CD8-positive, alpha-beta T cell (primary cell): ENCODE measurements at regions of chr5 and their contacts with region 1.

Region 1: DNA sequence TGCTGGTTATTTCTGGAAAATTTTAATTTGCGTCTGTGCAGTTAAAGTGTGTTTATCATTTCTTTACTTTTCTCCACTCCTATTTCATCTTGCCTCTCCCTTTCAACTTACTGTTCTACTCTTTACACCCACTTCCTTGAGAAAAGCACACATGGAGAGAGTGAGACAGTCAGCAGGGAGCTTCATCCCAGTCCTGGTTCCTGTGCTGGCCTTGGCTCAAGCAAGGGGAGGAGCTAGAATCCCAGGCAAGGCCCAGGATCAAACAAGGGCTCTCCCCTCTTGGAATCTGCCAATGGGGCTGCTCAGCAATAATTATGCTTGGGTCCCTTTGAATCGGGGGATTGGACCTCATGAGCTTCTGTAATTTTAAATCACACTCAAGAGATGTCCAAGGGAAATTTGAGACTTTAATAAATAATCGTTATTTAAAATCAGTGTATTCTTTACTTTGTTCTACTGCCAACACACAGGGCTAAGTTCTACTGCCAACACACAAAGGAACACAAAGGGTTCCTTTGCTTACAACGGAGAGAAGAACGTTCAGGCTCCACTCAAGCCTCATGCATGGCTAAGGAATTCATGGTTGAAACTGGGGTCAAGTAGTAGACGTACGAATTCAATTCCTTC is 439.3 kb upstream of the DAB2 start:
- DNase-seq: no peak
- ATAC-seq: no peak
- H3K4me3 ChIP-seq: no peak overlapping the region
- H3K4me3 Mint-ChIP-seq: no peak overlapping the region
- H3K27ac ChIP-seq: no peak overlapping the region
- H3K27ac Mint-ChIP-seq: no peak overlapping the region
- H3K4me1 ChIP-seq: no peaks in the 10 kb centered on the region
- H3K4me1 Mint-ChIP-seq: no peaks in the 10 kb centered on the region
- H3K27me3 ChIP-seq: no peaks in the 10 kb centered on the region
- H3K27me3 Mint-ChIP-seq: peaks cover 6% of the 10 kb centered on the region
- CTCF ChIP-seq: no peak

Region 2: GRCh38 chr5:39892708-39893107 is 28.7 kb after region 1 on chr5:
- CTCF ChIA-PET with region 1: no interaction called
- POLR2A ChIA-PET with region 1: no interaction called
- intact Hi-C with region 1: loop called in 1 of 2 experiments (anchors 1 kb)
- DNase-seq: no peak
- ATAC-seq: no peak
- H3K4me3 ChIP-seq: no peak overlapping the region
- H3K4me3 Mint-ChIP-seq: no peak overlapping the region
- H3K27ac ChIP-seq: no peak overlapping the region
- H3K27ac Mint-ChIP-seq: no peak overlapping the region
- H3K4me1 ChIP-seq: no peaks in the 10 kb centered on the region
- H3K4me1 Mint-ChIP-seq: no peaks in the 10 kb centered on the region
- H3K27me3 ChIP-seq: no peaks in the 10 kb centered on the region
- H3K27me3 Mint-ChIP-seq: peaks cover 9% of the 10 kb centered on the region
- CTCF ChIP-seq: no peak